CD8-positive, alpha-beta memory T cell (primary cell): ENCODE measurements at regions of chr2 and their contacts with region 1.

Region 1: GRCh38 chr2:231452799-231453508 is 11.3 kb downstream of the NCL start:
- DNase-seq: peak in 1 of 5 donors; percentile 14
- H3K4me3 ChIP-seq: no peak overlapping the region
- H3K4me3 Mint-ChIP-seq: no peak overlapping the region
- H3K27ac ChIP-seq: no peak overlapping the region
- H3K27ac Mint-ChIP-seq: peak overlapping the region in 7 of 8 donors; percentile 14 to 81 (median 73)
- H3K4me1 ChIP-seq: no peaks in the 10 kb centered on the region
- H3K4me1 Mint-ChIP-seq: peaks cover 13 to 19% (median 18%) of the 10 kb centered on the region in 3 donors
- H3K27me3 ChIP-seq: no peaks in the 10 kb centered on the region
- H3K27me3 Mint-ChIP-seq: peaks cover 0 to 2% of the 10 kb centered on the region in 2 donors

Region 2: DNA sequence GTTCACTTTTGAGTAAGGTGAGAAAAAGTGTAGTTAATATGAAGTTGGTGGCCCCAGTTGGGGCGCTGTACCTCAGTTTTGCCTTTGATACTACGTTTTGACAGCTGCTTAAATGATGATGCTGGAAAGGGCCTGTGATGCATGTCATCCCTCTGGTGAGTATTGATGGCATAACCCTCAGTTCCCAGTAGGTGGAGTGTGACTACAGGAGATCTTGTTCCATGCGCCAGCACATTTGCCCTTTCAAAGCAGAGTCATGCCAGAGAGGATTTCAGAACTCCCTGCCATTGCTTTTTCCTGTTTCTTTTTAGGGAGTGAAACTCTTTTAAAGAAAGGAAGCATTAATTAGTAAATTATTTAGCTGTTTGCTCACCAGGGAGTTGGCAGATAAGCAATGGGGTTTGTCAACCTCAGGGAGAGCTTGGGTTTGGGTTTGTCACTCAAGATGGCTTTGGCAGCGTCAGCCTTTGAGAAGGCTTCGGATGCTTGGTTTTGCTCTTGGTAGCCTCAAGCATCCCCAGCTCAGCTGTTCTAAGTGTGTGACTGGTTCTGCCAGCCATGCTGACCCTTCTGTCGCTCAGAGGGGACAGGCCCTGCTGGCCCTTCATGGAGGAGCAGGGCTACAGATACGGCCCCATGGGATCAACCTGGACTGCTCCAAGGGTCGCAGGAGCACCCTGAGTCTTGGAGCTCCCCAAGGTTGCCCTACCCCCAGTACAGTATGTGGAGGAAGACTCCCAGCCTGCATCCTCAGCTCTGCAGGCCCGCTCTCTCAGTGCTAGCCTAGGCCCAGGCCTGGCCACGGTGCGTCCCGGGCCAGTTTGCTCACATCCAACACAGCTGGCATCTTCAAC is 225.4 kb before region 1 on chr2:
- CTCF ChIA-PET with region 1: interaction called, 14 read pairs
- POLR2A ChIA-PET with region 1: no interaction called
- DNase-seq: peak in 4 of 5 donors; percentile 4 to 57 (median 31)
- H3K4me3 ChIP-seq: no peak overlapping the region
- H3K4me3 Mint-ChIP-seq: no peak overlapping the region
- H3K27ac ChIP-seq: no peak overlapping the region
- H3K27ac Mint-ChIP-seq: no peak overlapping the region
- H3K4me1 ChIP-seq: no peaks in the 10 kb centered on the region
- H3K4me1 Mint-ChIP-seq: no peaks in the 10 kb centered on the region
- H3K27me3 ChIP-seq: no peaks in the 10 kb centered on the region
- H3K27me3 Mint-ChIP-seq: no peaks in the 10 kb centered on the region

Region 3: GRCh38 chr2:231425811-231426728 is 26.9 kb before region 1 on chr2:
- CTCF ChIA-PET with region 1: interaction called, 10 read pairs
- POLR2A ChIA-PET with region 1: interaction called, 11 read pairs
- DNase-seq: peak; percentile 29 to 92 (median 74)
- H3K4me3 ChIP-seq: no peak overlapping the region
- H3K4me3 Mint-ChIP-seq: peak overlapping the region; percentile 23 to 82 (median 75)
- H3K27ac ChIP-seq: peak overlapping the region; percentile 81
- H3K27ac Mint-ChIP-seq: peak overlapping the region; percentile 96 to 99 (median 98)
- H3K4me1 ChIP-seq: peaks cover 10% of the 10 kb centered on the region
- H3K4me1 Mint-ChIP-seq: peaks cover 14 to 24% (median 22%) of the 10 kb centered on the region in 3 donors
- H3K27me3 ChIP-seq: no peaks in the 10 kb centered on the region
- H3K27me3 Mint-ChIP-seq: peaks cover 0 to 2% of the 10 kb centered on the region in 2 donors

Region 4: DNA sequence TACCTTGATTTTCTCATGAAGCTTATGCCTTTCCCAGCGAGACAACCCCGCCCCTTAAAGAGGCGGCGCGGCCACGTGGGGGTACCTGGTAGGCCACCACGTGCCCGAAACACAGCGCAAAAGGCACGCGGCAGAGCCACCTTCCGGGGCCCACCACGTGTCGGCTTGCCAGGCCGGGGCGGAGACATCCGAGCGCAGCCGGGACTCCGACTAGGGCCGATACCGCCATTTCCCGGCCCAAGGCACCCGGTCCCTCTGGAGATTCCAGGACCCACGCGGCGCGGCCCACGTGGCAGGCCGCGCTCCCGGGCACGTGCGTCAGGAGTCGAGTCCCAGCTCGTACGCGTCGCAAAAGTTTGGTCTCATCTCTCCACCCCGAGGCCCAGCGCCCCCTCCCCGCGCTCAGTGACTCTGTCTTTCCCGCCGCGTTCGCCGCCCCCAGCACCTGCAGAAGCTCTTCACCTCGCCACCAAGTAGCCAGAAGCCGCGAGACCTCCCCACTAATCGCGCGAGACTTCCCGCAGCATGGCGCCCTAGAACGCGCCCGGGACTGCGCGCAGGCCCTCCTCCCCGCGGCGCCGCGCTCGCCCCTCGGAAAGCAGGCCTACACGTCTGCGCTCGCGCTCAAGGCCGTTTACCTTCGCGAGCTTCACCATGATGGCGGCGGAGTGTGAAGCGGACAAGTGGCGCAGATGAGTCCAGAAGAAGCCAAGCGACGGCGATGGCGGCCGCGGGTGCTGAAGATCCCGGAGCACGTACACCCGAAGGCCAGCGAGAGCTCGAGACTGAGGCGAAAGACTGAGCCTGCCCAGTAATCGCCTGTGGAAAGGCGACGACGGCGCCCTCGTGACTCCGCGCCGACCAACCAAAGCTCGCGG is 11.0 kb after region 1 on chr2 and contains the start of gene NCL:
- CTCF ChIA-PET with region 1: interaction called, 37 read pairs
- POLR2A ChIA-PET with region 1: interaction called, 11 read pairs
- DNase-seq: peak; percentile 79 to 93 (median 88)
- H3K4me3 ChIP-seq: peak within 1 kb of the TSS; percentile 88
- H3K4me3 Mint-ChIP-seq: peak within 1 kb of the TSS; percentile 94 to 100 (median 96)
- H3K27ac ChIP-seq: peak within 1 kb of the TSS; percentile 98
- H3K27ac Mint-ChIP-seq: peak within 1 kb of the TSS; percentile 98 to 100 (median 100)
- H3K4me1 ChIP-seq: peaks cover 42% of the 10 kb centered on the region
- H3K4me1 Mint-ChIP-seq: peaks cover 47 to 55% (median 54%) of the 10 kb centered on the region in 3 donors
- H3K27me3 ChIP-seq: no peaks in the 10 kb centered on the region
- H3K27me3 Mint-ChIP-seq: peaks cover 0 to 13% of the 10 kb centered on the region in 2 donors
- total RNA-seq, gene NCL: 1,673 to 1,772 TPM